Psoas muscle (tissue), 8 donors: ENCODE measurements at regions of chr13 and their contacts with region 1.

Region 1: GRCh38 chr13:37074703-37075102 is 15.2 kb upstream of the SUPT20H start:
- DNase-seq: no peak
- ATAC-seq: peak in 1 of 4 donors; percentile 58
- H3K4me3 ChIP-seq: no peak overlapping the region
- H3K27ac ChIP-seq: no peak overlapping the region
- H3K4me1 ChIP-seq: no peaks in the 10 kb centered on the region
- H3K27me3 ChIP-seq: no peaks in the 10 kb centered on the region
- CTCF ChIP-seq: peak; percentile 46

Region 2: GRCh38 chr13:37194428-37194861 is 119.7 kb after region 1 on chr13:
- intact Hi-C with region 1: no loop called
- DNase-seq: no peak
- ATAC-seq: no peak
- H3K4me3 ChIP-seq: no peak overlapping the region
- H3K27ac ChIP-seq: no peak overlapping the region
- H3K4me1 ChIP-seq: no peaks in the 10 kb centered on the region
- H3K27me3 ChIP-seq: no peaks in the 10 kb centered on the region
- CTCF ChIP-seq: no peak

Region 3: DNA sequence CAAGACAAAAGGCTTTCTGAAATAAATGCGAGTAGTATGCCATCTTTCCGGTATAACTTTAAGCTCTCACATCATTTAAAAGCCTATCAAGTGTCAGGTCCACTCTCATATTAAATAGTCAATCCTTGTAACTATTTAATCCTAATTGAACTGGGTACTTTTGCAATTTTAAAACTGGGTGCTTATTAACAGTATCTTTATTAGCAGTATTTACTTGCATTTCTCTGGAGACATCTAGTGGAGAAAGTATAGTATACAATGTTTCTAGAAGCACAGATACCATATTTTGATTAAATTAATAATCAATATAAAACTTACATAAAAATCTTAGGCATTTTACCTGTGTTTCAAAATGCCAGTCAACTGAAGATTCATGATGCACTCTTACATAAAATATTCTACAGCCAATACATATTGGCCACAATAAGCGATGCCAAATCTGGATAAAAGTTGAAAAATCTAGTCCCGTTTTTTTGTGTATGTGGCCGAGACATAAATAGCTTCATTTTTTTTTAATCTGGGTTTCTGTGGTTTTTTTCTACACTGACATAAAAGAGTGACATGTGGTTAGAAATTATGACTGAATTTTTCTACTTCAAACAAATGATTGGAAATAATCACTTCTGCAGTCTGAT is 528.2 kb after region 1 on chr13:
- intact Hi-C with region 1: loop called in 1 of 2 experiments (anchors 5 kb)
- DNase-seq: no peak
- ATAC-seq: no peak
- H3K4me3 ChIP-seq: no peak overlapping the region
- H3K27ac ChIP-seq: no peak overlapping the region
- H3K4me1 ChIP-seq: no peaks in the 10 kb centered on the region
- H3K27me3 ChIP-seq: no peaks in the 10 kb centered on the region
- CTCF ChIP-seq: peak; percentile 45

Region 4: DNA sequence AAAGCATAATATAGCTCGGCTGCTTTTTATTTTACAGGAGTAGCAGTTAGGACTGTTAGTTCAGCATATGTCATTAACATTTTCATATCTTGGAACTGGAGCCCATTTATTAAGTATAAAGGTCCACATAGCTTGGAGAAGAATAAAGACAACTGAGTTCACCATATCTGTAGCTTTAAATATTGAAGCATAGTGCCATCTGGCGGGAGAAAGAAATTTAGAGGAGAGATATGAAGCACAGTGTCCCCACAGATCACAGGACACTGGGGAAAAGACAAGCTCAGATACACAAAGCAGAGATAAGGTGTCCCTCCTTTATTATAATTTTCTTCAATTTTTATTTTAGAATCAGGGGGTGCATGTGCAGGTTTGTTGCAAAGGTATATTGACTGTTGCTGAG is 1507.4 kb after region 1 on chr13:
- intact Hi-C with region 1: loop called in 1 of 2 experiments (anchors 10 kb)
- DNase-seq: no peak
- ATAC-seq: peak in 2 of 4 donors; percentile 43 to 48
- H3K4me3 ChIP-seq: no peak overlapping the region
- H3K27ac ChIP-seq: no peak overlapping the region
- H3K4me1 ChIP-seq: no peaks in the 10 kb centered on the region
- H3K27me3 ChIP-seq: no peaks in the 10 kb centered on the region
- CTCF ChIP-seq: peak; percentile 34